HAP-1 (cell line): ENCODE measurements at regions of chr3 and their contacts with region 1.

Region 1: DNA sequence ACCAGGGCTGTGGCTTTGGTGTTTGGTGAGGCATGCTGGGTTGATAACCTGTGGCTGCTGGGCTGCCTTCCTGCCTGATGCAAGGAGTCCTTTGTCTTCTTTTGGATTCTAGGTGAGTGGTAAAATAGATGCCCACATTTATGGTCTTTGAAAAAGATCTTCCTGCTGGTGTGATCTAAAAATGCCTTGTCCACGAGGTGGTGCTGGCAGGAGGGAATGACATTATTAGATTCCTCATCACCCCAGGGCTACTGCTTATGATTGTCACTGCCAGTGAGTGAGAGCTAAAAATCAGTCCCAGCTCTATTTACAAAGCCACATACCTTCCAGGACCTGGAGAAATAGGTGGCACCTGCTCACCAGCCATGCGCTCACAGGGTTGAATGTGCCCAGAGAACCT is 355.5 kb upstream of the ROPN1 start:
- DNase-seq: no peak
- H3K4me3 ChIP-seq: no peak overlapping the region
- H3K4me1 ChIP-seq: no peaks in the 10 kb centered on the region; the same call in 1 of the 2 replicates
- H3K27me3 ChIP-seq: peaks cover 8% of the 10 kb centered on the region

Region 2: DNA sequence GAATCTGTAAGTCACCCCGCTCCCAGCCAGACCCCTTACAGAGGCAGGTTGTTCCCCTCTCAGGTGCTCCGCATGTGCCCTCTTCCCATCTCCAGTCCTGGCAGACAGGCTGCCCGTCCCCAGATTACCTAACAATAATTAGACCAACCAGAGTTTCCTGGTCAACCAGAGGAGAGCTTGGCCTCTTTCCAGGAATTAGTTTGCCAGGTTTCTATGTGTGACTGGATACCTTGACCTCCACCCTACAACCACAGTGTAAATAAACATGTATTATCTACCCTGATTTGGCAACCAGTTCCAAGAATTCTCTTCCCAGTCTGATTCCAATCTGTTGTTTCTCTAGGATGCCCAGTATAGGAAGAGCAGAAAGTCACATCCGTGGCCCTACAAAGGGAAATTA is 204.8 kb after region 1 on chr3:
- in situ Hi-C with region 1: loop called (anchors 5 kb)
- DNase-seq: no peak
- H3K4me3 ChIP-seq: no peak overlapping the region
- H3K4me1 ChIP-seq: no peaks in the 10 kb centered on the region; the same call in 1 of the 2 replicates
- H3K27me3 ChIP-seq: no peaks in the 10 kb centered on the region

Region 3: DNA sequence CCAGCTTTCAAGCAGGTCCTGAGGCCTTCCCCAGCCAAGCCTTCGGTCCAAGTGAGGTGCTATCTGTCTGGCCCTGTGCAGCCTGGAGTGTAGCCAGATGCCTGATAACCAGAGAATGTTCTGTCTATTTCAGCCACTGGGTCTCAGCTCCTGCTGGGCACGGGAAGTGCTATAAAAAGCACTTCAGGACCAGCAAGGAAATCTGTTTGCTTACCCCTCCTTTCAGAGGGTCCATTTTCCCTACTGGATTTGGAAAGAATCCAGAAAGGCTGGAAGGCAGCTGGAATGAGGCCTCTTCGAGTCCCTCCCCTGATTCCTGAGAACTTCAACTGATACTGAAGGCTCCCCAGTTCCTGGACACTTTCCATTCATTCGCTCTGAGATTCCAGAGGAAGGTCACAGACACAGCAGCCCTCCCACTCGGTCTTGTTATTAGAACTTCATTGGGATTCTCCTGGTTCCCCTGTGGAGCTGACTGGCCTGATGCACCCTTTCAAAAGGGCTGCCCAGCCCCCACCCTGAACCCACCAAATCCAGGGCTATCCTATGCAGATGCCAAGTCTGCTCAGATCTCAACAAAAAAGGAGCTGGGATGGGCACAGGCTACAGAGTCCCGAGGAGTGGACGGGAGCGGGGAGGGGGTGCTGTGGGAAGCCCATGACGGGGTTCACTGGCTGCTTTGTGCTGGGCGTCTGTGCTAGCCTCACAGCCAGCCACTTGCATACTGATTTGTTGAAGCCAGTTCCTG is 453.3 kb after region 1 on chr3:
- in situ Hi-C with region 1: no loop called
- DNase-seq: no peak
- H3K4me3 ChIP-seq: no peak overlapping the region
- H3K4me1 ChIP-seq: no peaks in the 10 kb centered on the region
- H3K27me3 ChIP-seq: no peaks in the 10 kb centered on the region